ENCODE measurements at regions of chr5 and their contacts with region 1.

Region 1: GRCh38 chr5:55102348-55102747 is at the start of gene GZMA:
- DNase-seq: peak; percentile 36
- H3K4me3 Mint-ChIP-seq: peak within 1 kb of the TSS; percentile 85
- H3K27ac Mint-ChIP-seq: peak within 1 kb of the TSS; percentile 93
- H3K4me1 Mint-ChIP-seq: peaks cover 87% of the 10 kb centered on the region
- H3K27me3 Mint-ChIP-seq: no peaks in the 10 kb centered on the region
- total RNA-seq, gene GZMA: 88.1 and 93.7 TPM in 2 replicates

Region 2: DNA sequence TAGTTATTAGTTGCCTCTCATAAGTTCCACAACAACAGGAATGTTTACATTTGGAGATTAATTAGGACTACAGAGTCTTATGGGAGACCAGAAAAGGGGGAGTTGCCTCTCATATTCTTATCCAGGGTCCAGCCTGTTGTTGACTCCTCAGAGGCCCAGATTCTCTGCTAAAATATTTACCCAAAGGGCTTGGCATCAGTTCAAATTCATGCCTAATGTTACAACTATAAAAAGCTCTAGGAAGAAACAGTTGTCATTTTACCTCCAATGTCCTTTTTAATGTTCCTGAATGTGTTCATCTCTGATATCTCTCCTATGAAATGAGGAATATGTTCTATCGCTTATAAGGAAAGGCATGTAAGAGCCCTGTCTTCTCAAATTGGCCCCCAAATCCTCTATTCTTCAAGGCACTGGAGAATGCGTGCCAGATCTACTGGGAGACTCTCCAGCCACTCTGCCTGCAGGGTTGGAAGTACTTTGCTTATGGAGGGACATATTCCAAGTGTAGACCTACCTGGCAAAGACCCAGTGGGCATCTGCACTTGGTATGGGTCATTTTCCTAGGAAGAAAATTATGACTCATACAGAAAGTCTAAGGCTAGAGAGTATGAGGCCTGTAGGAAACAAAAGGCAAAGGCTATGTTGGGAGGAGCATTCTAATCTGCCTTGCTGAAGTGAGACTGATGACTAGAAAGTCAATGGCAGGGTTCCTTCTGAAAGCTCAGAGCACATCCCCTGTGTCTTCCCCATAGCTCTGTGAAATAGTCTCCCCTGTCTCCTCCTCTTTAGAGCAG is 309.5 kb before region 1 on chr5:
- intact Hi-C with region 1: loop called (anchors 1 kb)
- DNase-seq: no peak
- H3K4me3 Mint-ChIP-seq: peak overlapping the region; percentile 32
- H3K27ac Mint-ChIP-seq: peak overlapping the region; percentile 91
- H3K4me1 Mint-ChIP-seq: peaks cover 47% of the 10 kb centered on the region
- H3K27me3 Mint-ChIP-seq: peaks cover 3% of the 10 kb centered on the region

Region 3: GRCh38 chr5:54944364-54944763 is 158.0 kb before region 1 on chr5:
- intact Hi-C with region 1: loop called (anchors 2 kb)
- DNase-seq: peak; percentile 13
- H3K4me3 Mint-ChIP-seq: no peak overlapping the region
- H3K27ac Mint-ChIP-seq: no peak overlapping the region
- H3K4me1 Mint-ChIP-seq: peaks cover 22% of the 10 kb centered on the region
- H3K27me3 Mint-ChIP-seq: peaks cover 9% of the 10 kb centered on the region

Region 4: DNA sequence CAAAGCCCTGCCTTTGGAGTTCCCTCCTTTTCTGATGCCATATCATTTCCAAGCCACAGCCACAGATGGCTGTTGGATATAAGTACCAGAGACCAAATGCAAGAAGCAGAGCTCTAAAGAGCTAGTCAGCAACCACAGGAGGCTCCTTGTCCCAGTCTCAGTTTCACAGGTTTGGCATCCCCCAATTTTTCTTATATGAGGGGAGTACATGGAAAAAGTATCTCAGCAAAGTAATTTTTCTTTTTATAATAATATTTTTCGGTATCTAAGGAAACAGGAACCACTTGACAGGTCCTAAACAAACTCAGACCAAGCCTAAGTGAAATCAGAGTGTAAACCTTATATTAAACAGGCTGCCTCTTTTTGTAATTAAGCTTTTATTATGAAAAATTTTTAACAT is 58.2 kb before region 1 on chr5:
- intact Hi-C with region 1: no loop called
- DNase-seq: no peak
- H3K4me3 Mint-ChIP-seq: no peak overlapping the region
- H3K27ac Mint-ChIP-seq: no peak overlapping the region
- H3K4me1 Mint-ChIP-seq: peaks cover 20% of the 10 kb centered on the region
- H3K27me3 Mint-ChIP-seq: no peaks in the 10 kb centered on the region

Region 5: GRCh38 chr5:55062039-55062779 is 40.1 kb before region 1 on chr5:
- intact Hi-C with region 1: loop called (anchors 1 kb)
- DNase-seq: peak; percentile 79
- H3K4me3 Mint-ChIP-seq: peak overlapping the region; percentile 79
- H3K27ac Mint-ChIP-seq: peak overlapping the region; percentile 98
- H3K4me1 Mint-ChIP-seq: peaks cover 83% of the 10 kb centered on the region
- H3K27me3 Mint-ChIP-seq: peaks cover 1% of the 10 kb centered on the region

Region 6: GRCh38 chr5:55146543-55147151 is 44.3 kb after region 1 on chr5:
- intact Hi-C with region 1: loop called (anchors 1 kb)
- DNase-seq: peak; percentile 82
- H3K4me3 Mint-ChIP-seq: peak overlapping the region; percentile 20
- H3K27ac Mint-ChIP-seq: no peak overlapping the region
- H3K4me1 Mint-ChIP-seq: peaks cover 31% of the 10 kb centered on the region
- H3K27me3 Mint-ChIP-seq: peaks cover 17% of the 10 kb centered on the region

Region 7: GRCh38 chr5:55172051-55172899 is 69.9 kb after region 1 on chr5:
- intact Hi-C with region 1: no loop called
- DNase-seq: peak; percentile 61
- H3K4me3 Mint-ChIP-seq: peak overlapping the region; percentile 86
- H3K27ac Mint-ChIP-seq: no peak overlapping the region
- H3K4me1 Mint-ChIP-seq: peaks cover 46% of the 10 kb centered on the region
- H3K27me3 Mint-ChIP-seq: peaks cover 78% of the 10 kb centered on the region

Measured in activated T-helper 1 cell treated with anti-CD3 and anti-CD28 coated beads, Interleukin-12 subunit alpha, Interleukin-12 subunit beta, Interleukin-2, Interleukin-4 antibody, amounts not matched to agents 30 ng/mL and 10 ng/mL and 1 ng/mL, durations not matched to agents 14 hours and 24 hours and 36 hours (primary cell).